ENCODE measurements at regions of chr3 and their contacts with region 1.

Region 1: GRCh38 chr3:32835961-32836360 is 18.2 kb downstream of the TRIM71 start:
- DNase-seq: no peak
- H3K4me3 ChIP-seq: no peak overlapping the region
- H3K27ac ChIP-seq: no peak overlapping the region
- H3K4me1 ChIP-seq: no peaks in the 10 kb centered on the region
- CTCF ChIP-seq: no peak

Region 2: GRCh38 chr3:33003308-33003707 is 167.3 kb after region 1 on chr3:
- CTCF ChIA-PET with region 1: no interaction called
- POLR2A ChIA-PET with region 1: interaction called, 10 read pairs
- intact Hi-C with region 1: no loop called
- DNase-seq: no peak
- H3K4me3 ChIP-seq: no peak overlapping the region
- H3K27ac ChIP-seq: no peak overlapping the region
- H3K4me1 ChIP-seq: peaks cover 14% of the 10 kb centered on the region
- CTCF ChIP-seq: no peak

Measured in OCI-LY7 (cell line).